ENCODE measurements at regions of chr6 and their contacts with region 1.

Region 1: GRCh38 chr6:154675602-154676088 is 57.6 kb upstream of the SCAF8 start:
- DNase-seq: peak; percentile 87
- CTCF ChIP-seq: peak; percentile 99

Region 2: GRCh38 chr6:153947808-153948447 is 727.7 kb before region 1 on chr6:
- CTCF ChIA-PET with region 1: no interaction called
- POLR2A ChIA-PET with region 1: no interaction called
- DNase-seq: peak; percentile 10
- CTCF ChIP-seq: peak; percentile 92

Region 3: GRCh38 chr6:154590745-154591144 is 84.9 kb before region 1 on chr6:
- CTCF ChIA-PET with region 1: no interaction called
- POLR2A ChIA-PET with region 1: no interaction called
- DNase-seq: no peak
- CTCF ChIP-seq: no peak

Region 4: GRCh38 chr6:154653853-154654252 is 21.8 kb before region 1 on chr6:
- CTCF ChIA-PET with region 1: interaction called, 15 read pairs
- POLR2A ChIA-PET with region 1: no interaction called
- DNase-seq: no peak
- CTCF ChIP-seq: no peak

Region 5: GRCh38 chr6:154661768-154662167 is 13.9 kb before region 1 on chr6:
- CTCF ChIA-PET with region 1: interaction called, 16 read pairs
- POLR2A ChIA-PET with region 1: no interaction called
- DNase-seq: no peak
- CTCF ChIP-seq: no peak

Region 6: DNA sequence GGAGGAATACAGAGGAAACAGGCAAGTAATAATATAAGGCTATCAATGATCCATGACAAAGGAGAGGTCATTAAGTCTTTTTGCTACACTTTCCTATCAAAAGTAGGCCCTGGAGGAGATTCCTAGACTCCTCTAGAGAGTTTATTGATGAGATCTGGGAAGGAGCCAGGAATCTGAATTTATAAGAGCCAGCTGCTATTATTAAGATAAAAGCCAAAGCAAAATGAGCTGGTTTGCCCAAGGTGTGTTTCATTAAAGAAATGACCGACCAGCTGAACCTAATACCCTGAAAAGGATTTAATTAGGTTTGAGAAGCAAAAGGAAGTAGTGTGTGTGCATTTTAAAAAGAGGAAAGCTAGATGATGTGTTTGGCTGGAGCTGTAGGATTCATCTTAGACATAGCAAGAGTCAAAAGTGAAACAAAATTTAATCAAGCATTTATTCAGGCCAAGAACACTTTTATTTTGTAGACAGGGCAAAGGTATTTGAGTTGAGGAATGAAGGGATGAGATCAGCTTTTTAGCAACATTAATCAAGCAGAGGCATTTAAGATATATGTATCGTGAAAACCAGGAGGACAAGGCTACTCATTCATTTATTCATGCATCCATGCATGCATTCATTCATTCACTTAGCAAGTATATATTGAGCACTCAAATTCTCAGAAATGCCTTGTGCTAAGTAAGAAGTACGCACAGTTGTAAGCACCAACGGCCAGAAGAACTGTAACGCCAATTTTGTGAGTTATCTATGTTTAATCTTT is 14.0 kb after region 1 on chr6:
- CTCF ChIA-PET with region 1: interaction called, 44 read pairs
- POLR2A ChIA-PET with region 1: no interaction called
- DNase-seq: no peak
- CTCF ChIP-seq: no peak

Region 7: DNA sequence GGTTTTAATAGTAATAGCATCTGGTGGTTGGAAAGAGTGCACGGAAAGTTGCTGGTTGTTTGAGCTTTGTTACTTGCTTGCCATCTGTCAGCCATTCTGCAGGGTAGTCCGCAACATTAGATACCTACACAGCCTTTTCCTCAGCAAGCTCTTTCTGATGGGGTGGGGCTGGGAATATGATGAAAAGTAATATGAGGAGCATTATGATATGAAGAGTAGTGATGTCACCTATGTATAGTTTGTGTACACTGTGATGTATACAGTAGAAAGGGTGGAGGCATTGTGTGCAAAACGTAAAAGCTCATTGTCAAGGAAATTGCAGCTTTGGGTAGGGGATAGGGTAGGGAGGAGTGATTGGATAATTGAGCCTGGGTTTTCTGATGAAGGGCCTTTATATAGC is 73.7 kb after region 1 on chr6:
- CTCF ChIA-PET with region 1: no interaction called
- POLR2A ChIA-PET with region 1: no interaction called
- DNase-seq: no peak
- CTCF ChIP-seq: no peak

Region 8: GRCh38 chr6:154805288-154805911 is 129.8 kb after region 1 on chr6:
- CTCF ChIA-PET with region 1: interaction called, 175 read pairs
- POLR2A ChIA-PET with region 1: no interaction called
- DNase-seq: peak; percentile 20
- CTCF ChIP-seq: no peak

Region 9: DNA sequence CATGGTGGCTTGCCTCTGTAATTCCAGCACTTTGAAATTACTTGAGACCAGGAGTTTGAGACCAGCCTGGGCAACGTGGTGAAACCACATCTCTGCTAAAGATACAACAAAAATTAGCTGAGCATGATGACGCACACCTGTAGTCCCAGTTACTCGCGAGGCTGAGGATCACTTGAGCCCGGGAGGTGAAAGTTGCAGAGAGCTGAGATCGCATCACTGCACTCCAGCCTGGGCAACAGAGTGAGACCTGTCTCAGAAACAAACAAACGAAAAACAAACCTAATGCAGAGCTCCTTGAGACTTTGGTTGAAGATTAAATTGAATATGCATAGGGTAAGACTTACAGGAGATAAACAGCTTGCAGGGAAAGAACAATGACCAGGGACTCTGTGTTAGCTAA is 138.4 kb after region 1 on chr6:
- CTCF ChIA-PET with region 1: interaction called, 175 read pairs
- POLR2A ChIA-PET with region 1: no interaction called
- DNase-seq: no peak
- CTCF ChIP-seq: no peak

Measured in GM10248 (cell line).